ENCODE measurements at regions of chr19 and their contacts with region 1.

Region 1: GRCh38 chr19:43743022-43743421 is 11.7 kb downstream of the SMG9 start:
- DNase-seq: no peak
- ATAC-seq: no peak
- H3K4me3 ChIP-seq: no peak overlapping the region
- H3K27ac ChIP-seq: peak overlapping the region in 1 of 10 donors; percentile 9
- H3K4me1 ChIP-seq: peaks cover 0 to 32% (median 0%) of the 10 kb centered on the region in 9 donors
- H3K27me3 ChIP-seq: no peaks in the 10 kb centered on the region
- CTCF ChIP-seq: no peak

Region 2: GRCh38 chr19:43774103-43774939 is 31.3 kb after region 1 on chr19:
- intact Hi-C with region 1: loop called in 1 of 10 experiments (anchors 2 kb)
- DNase-seq: peak; percentile 59 to 65
- ATAC-seq: peak; percentile 79 to 92 (median 86)
- H3K4me3 ChIP-seq: peak overlapping the region in 9 of 10 donors; percentile 14 to 40 (median 30)
- H3K27ac ChIP-seq: no peak overlapping the region
- H3K4me1 ChIP-seq: peaks cover 0 to 45% (median 16%) of the 10 kb centered on the region in 9 donors
- H3K27me3 ChIP-seq: peaks cover 0 to 6% (median 0%) of the 10 kb centered on the region in 7 donors
- CTCF ChIP-seq: peak; percentile 24 to 85 (median 57)

Region 3: DNA sequence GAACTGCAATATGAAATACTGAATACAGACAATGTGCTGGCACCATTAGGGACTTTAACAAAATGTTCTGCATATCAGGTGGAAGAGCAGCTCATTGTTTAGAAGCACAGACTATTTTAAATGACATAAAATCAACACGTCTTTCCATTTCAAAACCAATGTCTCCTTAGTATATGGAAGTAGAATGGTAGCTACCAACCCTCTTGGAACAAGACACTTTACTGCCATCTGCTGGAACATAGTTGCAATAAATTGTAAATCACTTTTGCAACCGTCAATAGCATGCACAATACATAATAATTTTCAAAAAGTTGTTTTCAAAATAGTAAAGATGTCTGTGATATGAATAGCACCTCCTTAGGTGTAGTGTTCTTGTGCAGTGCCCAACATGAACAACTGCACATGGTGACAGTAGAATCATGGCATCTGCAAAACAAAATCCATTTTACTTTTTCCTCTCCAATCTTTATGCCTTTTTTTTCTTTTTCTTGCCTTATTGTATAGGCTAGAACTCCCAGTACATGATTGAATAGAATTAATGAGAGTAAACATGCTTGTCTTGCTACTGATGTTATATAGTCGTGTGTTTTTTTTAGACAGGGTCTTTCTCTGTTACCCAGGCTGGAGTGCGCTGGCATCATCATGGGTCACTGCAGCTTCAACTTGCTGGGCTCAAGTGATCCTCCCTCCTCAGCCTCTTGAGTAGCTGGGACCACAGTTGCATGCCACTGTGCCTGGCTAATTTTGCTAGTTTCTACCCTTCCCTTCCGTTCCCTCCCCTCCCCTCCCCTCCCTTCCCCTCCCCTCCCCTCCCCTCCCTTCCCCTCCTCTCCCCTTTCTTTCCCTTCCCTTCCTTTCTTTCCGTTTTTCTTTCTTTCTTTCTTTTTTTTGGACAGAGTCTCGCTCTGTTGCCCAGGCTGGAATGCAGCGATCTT is 67.0 kb after region 1 on chr19:
- intact Hi-C with region 1: loop called in 1 of 10 experiments (anchors 2 kb)
- DNase-seq: no peak
- ATAC-seq: peak in 2 of 8 donors; percentile 45 to 47
- H3K4me3 ChIP-seq: no peak overlapping the region
- H3K27ac ChIP-seq: no peak overlapping the region
- H3K4me1 ChIP-seq: no peaks in the 10 kb centered on the region
- H3K27me3 ChIP-seq: peaks cover 0 to 18% (median 0%) of the 10 kb centered on the region in 7 donors
- CTCF ChIP-seq: peak in 8 of 9 donors; percentile 24 to 69 (median 61)

Region 4: GRCh38 chr19:43934985-43935708 is 192.1 kb after region 1 on chr19 and contains the start of gene ZNF45:
- intact Hi-C with region 1: no loop called
- DNase-seq: peak; percentile 85 to 94
- ATAC-seq: peak; percentile 97 to 99 (median 99)
- H3K4me3 ChIP-seq: peak within 1 kb of the TSS; percentile 43 to 76 (median 66)
- H3K27ac ChIP-seq: peak within 1 kb of the TSS; percentile 39 to 92 (median 86)
- H3K4me1 ChIP-seq: peaks cover 0 to 24% (median 18%) of the 10 kb centered on the region in 9 donors
- H3K27me3 ChIP-seq: no peaks in the 10 kb centered on the region
- CTCF ChIP-seq: no peak
- total RNA-seq, gene ZNF45: 7.0 to 10.7 (median 8.0) TPM

Region 5: GRCh38 chr19:43966079-43966694 is 223.2 kb after region 1 on chr19:
- intact Hi-C with region 1: no loop called
- DNase-seq: no peak
- ATAC-seq: no peak
- H3K4me3 ChIP-seq: no peak overlapping the region
- H3K27ac ChIP-seq: no peak overlapping the region
- H3K4me1 ChIP-seq: no peaks in the 10 kb centered on the region
- H3K27me3 ChIP-seq: no peaks in the 10 kb centered on the region
- CTCF ChIP-seq: no peak